ENCODE measurements at regions of chr20 and their contacts with region 1.

Region 1: GRCh38 chr20:50189681-50190582 is 698 bp upstream of the CEBPB start:
- DNase-seq: peak; percentile 92 to 93
- H3K4me3 ChIP-seq: peak overlapping the region; percentile 90 to 96 (median 95)
- H3K27ac ChIP-seq: peak overlapping the region; percentile 98 to 99 (median 99)
- H3K4me1 ChIP-seq: peaks cover 21 to 32% of the 10 kb centered on the region in 2 donors
- H3K27me3 ChIP-seq: no peaks in the 10 kb centered on the region
- CTCF ChIP-seq: peak; percentile 62 to 91 (median 83)
- POLR2A ChIP-seq: no peak

Region 2: DNA sequence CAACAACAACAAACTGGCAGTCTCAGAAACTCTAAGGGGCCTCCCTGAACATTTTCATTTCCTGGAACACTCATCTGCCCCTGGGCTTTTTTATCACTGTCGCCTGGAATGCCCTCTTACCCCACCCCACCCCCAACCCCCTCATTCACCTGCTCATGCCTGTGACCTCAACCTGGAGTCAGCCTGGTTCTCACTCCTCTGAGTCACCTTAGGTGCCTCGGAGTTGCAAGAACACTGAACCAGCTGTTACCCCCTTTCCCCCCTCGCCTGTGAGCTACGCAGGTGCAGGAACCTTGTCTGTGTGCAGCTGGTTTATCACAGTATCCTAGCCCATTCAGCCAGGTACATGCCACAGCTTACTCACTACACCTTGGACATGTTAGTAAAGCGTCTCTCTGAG is 220.0 kb before region 1 on chr20:
- intact Hi-C with region 1: no loop called
- DNase-seq: no peak
- H3K4me3 ChIP-seq: no peak overlapping the region
- H3K27ac ChIP-seq: no peak overlapping the region
- H3K4me1 ChIP-seq: no peaks in the 10 kb centered on the region
- H3K27me3 ChIP-seq: no peaks in the 10 kb centered on the region
- CTCF ChIP-seq: no peak
- POLR2A ChIP-seq: no peak

Region 3: DNA sequence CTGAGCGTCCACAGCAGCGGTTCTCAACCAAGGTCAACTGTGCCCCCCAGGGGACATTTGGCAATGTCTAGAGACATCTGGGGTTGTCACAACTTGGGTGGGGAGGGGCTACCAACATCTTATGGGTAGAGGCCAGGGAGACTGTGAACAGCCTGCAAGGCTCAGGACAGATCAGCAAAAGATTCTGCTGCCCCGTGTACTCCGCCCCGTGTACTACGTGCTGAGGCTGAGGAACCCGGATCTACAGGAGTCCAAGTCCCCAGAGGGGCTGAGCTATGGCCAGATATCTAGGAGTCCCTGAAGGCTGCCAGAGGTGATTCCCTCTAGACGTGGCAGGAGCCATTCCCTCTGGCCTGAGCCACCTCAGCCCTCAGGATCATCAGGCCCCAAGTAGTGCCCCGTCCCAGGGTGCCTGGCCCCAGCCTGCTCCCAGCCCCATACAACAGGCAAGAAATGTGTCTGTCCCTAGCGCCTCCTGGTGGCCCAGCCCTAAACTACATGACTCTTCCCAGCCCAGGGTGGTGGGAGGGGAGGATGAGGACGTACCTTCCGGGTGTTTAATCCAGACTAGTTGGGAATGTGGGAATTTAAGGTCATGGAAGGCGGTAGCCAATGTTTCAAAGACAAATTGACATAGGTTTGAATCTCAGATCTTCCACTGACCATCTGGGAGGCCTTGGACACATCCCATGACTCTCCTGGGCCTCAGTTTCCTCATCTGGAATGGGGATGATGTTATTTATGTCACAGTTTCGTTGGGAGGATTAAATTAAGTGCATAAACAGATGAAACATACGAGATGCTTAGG is 270.7 kb after region 1 on chr20:
- intact Hi-C with region 1: loop called (anchors 2 kb)
- DNase-seq: peak; percentile 87 to 91
- H3K4me3 ChIP-seq: no peak overlapping the region
- H3K27ac ChIP-seq: peak overlapping the region in 1 of 3 donors; percentile 29
- H3K4me1 ChIP-seq: peaks cover 16 to 30% of the 10 kb centered on the region in 2 donors
- H3K27me3 ChIP-seq: no peaks in the 10 kb centered on the region
- CTCF ChIP-seq: peak; percentile 89 to 97 (median 94)
- POLR2A ChIP-seq: no peak

Region 4: GRCh38 chr20:50467718-50468356 is 277.9 kb after region 1 on chr20:
- intact Hi-C with region 1: loop called (anchors 2 kb)
- DNase-seq: peak; percentile 19 to 23
- H3K4me3 ChIP-seq: no peak overlapping the region
- H3K27ac ChIP-seq: no peak overlapping the region
- H3K4me1 ChIP-seq: peaks cover 3 to 10% of the 10 kb centered on the region in 2 donors
- H3K27me3 ChIP-seq: no peaks in the 10 kb centered on the region
- CTCF ChIP-seq: no peak
- POLR2A ChIP-seq: no peak

Region 5: DNA sequence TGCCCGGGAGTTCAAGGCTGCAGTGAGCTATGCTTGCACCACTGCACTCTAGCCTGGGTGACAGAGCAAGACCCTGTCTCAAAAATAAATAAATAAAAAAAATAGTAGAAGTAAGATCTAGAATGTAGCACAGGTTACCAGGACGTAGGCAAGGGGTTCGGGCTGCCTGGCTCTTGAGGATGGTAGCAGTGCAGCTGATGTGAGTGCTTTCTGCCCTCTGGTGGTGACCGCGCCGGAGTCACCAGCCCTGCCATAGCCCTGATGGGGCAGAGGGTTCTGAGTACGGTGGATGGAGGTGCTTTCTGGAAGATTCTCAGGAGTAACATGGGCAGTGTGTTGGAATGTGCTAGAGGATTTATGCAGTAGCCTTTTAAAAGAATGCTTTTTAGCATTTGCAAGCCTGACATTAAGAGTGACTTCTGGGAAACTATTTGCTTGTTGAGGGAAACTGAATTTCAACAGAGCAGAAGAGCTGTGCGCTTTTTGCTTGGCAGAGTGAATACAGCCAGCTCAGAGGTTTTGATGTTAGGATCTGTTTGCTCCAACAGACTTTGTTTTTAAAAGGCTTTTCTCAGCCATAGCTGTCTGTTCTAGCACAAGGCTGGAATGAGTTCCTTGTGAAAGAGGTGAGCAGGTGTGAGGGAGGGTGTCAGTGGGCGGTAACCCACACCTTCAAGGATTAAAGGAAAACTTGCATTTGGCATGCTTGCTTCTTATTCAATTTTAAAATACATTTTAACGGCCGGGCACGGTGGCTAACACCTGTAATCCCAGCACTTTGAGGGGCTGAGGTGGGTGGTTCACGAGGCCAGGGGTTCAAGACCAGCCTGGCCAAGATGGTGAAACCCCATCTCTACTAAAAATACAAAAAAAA is 386.2 kb after region 1 on chr20:
- intact Hi-C with region 1: loop called (anchors 5 kb)
- DNase-seq: peak; percentile 73 to 75
- H3K4me3 ChIP-seq: no peak overlapping the region
- H3K27ac ChIP-seq: peak overlapping the region in 1 of 3 donors; percentile 34
- H3K4me1 ChIP-seq: peaks cover 18 to 34% of the 10 kb centered on the region in 2 donors
- H3K27me3 ChIP-seq: no peaks in the 10 kb centered on the region
- CTCF ChIP-seq: peak; percentile 29 to 75 (median 64)
- POLR2A ChIP-seq: no peak